Posterior vena cava (tissue), 2 donors: ENCODE measurements at regions of chr1 and their contacts with region 1.

Region 1: DNA sequence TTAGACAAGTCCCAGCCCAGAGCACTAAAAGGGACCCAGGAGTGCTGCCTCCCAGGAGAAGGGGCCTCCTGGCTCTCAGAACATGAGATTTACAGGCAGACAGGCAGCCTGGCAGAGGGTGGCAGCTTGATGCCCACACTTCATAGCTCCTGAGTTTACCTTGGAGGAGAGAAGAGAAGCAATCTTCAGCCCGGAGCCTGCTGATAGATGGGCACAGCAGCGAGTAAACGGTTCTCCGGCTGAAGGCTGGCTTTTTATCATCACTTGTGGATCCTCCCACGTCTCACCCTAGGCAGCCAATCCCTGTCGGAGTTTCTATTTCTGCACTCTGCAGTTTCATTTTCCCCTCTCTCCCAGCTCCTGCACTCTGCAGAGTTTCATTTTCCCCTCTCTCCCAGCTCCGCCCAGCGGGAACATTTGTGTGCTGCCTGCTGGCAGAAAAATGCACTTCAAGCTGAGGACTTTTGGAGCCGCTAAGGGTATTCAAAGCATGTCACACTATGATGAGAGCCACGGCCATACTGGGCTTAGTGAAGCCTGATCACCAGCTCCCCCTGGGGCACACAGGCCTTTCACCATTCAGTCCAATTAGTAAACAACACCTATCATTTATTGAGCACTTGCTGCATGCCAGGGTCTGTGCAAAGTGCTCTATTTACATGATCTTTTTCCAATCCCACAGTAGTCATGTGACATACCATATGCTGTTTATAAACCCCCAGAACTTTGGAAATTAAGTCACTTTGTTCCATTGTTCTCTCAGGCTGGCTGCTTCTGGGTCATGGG is at the start of gene IFI6:
- DNase-seq: peak; percentile 94
- total RNA-seq, gene IFI6: 55.2 to 104 TPM

Region 2: GRCh38 chr1:27201295-27201694 is 470.9 kb before region 1 on chr1:
- intact Hi-C with region 1: no loop called
- DNase-seq: no peak

Region 3: DNA sequence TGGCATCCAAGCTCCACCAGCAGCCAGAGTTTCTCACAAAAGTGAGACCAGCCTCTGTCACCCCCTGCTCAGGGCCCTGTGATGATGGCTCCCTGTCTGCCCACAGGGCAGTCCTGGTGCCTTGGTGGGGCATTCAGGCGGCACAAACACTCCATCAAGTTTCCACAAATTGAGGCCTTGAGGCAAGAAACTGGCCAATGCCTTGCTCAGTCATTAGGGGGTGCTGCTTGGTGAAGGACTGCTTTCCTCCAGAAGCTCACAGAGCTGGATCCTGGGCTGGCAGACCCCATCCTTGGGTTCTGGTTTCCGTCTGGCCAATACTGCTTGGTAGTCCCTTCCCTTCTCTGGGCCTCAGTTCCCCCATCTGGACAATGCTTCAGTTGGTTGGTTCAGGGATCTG is 55.7 kb before region 1 on chr1:
- intact Hi-C with region 1: loop called in 1 of 2 experiments (anchors 2 kb)
- DNase-seq: no peak

Region 4: DNA sequence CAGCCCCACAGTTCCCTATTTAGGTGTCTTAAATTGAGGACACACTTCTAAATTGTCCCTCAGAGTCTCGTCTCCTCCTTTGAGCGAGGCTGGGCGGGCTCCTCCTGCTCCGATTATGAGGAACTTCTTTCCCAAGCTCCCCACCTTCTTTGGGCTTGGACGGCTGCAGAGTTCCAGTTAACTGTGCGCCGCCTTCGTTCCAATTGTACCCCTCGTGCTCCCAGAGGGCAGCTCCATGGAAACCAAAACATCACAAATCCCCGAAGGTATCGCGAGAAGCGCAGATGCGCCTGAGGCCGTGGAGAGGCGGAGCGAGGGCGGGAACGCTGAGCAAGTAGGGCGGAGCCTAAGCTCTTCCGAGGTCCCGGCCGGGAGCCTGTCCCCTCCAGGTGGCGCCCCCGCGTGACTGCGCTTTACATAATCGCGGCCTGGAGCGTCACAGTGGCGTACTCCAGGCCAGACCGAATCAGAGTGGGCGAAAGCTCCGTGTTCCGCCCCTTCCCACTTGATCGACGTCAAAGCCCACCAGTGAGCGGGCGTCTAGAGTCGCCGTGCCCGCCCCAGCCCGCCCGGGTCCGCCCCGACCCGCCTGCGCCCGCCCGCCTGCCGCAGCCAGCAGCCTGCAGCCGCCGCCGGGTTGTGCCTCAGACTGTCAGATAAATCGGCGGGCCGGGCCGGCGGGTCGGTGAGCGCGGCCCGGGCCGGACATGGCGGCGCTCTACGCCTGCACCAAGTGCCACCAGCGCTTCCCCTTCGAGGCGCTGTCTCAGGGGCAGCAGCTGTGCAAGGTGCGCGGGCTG is 53.4 kb after region 1 on chr1 and contains the start of gene FAM76A:
- intact Hi-C with region 1: loop called in 1 of 2 experiments (anchors 10 kb)
- DNase-seq: peak; percentile 100
- total RNA-seq, gene FAM76A: 16.5 to 21.0 TPM